ENCODE measurements at regions of chr18 and their contacts with region 1.

Region 1: GRCh38 chr18:27143580-27144287 is 41.4 kb downstream of the CHST9 start:
- DNase-seq: peak in 1 of 2 experiments; percentile 30
- H3K4me3 ChIP-seq: no peak overlapping the region
- H3K4me3 Mint-ChIP-seq: peak overlapping the region; percentile 27
- H3K27ac Mint-ChIP-seq: no peak overlapping the region
- H3K4me1 ChIP-seq: peaks cover 7% of the 10 kb centered on the region; the same call in 1 of the 2 replicates
- H3K4me1 Mint-ChIP-seq: peaks cover 6% of the 10 kb centered on the region
- H3K27me3 ChIP-seq: no peaks in the 10 kb centered on the region
- H3K27me3 Mint-ChIP-seq: no peaks in the 10 kb centered on the region
- CTCF ChIP-seq: no peak

Region 2: DNA sequence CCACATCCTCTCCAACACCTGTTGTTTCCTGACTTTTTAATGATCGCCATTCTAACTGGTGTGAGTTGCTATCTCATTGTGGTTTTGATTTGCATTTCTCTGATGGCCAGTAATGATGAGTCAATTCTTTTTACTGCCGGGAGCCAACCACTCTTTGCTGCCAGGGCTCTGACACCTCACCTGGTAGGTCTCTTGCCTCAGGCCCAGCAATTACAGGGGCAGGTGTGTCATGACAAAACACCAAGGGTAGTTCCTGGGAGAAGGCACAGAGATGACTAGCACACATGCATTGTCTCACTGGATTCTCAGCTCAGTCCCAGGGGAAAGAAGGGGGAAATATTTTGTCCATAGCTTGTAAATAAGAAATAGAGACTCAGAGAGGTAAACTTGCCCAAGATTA is 80.9 kb before region 1 on chr18:
- CTCF ChIA-PET with region 1: no interaction called
- POLR2A ChIA-PET with region 1: no interaction called
- intact Hi-C with region 1: loop called (anchors 5 kb)
- DNase-seq: no peak
- H3K4me3 ChIP-seq: no peak overlapping the region
- H3K4me3 Mint-ChIP-seq: no peak overlapping the region
- H3K27ac Mint-ChIP-seq: no peak overlapping the region
- H3K4me1 ChIP-seq: peaks cover 31% of the 10 kb centered on the region
- H3K4me1 Mint-ChIP-seq: peaks cover 7% of the 10 kb centered on the region
- H3K27me3 ChIP-seq: no peaks in the 10 kb centered on the region
- H3K27me3 Mint-ChIP-seq: no peaks in the 10 kb centered on the region
- CTCF ChIP-seq: no peak

Region 3: DNA sequence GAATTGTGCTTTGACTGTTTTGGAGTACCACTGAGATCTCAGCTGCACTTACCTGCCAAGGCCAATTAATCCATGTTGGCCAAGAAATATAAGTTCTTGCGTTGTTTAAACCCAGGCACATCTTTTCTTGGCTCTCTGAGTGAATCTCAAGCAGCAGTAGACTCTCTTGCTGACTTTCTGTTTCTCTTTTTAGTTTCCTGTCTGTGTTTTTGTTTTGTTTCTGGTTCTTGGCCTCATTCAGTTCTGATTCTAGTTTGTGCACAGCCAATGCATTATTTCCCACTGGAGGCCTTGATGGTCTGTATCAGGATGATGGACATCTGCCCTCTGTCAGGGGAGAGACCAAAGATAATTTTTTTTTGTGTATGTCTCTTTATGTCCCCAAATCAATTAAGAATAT is 653.8 kb after region 1 on chr18:
- CTCF ChIA-PET with region 1: no interaction called
- POLR2A ChIA-PET with region 1: no interaction called
- intact Hi-C with region 1: no loop called
- DNase-seq: no peak
- H3K4me3 ChIP-seq: no peak overlapping the region
- H3K4me3 Mint-ChIP-seq: no peak overlapping the region
- H3K27ac Mint-ChIP-seq: no peak overlapping the region
- H3K4me1 ChIP-seq: no peaks in the 10 kb centered on the region
- H3K4me1 Mint-ChIP-seq: peaks cover 7% of the 10 kb centered on the region
- H3K27me3 ChIP-seq: no peaks in the 10 kb centered on the region
- H3K27me3 Mint-ChIP-seq: no peaks in the 10 kb centered on the region
- CTCF ChIP-seq: no peak

Measured in Caco-2 (cell line).